ENCODE measurements at regions of chr11 and their contacts with region 1.

Region 1: DNA sequence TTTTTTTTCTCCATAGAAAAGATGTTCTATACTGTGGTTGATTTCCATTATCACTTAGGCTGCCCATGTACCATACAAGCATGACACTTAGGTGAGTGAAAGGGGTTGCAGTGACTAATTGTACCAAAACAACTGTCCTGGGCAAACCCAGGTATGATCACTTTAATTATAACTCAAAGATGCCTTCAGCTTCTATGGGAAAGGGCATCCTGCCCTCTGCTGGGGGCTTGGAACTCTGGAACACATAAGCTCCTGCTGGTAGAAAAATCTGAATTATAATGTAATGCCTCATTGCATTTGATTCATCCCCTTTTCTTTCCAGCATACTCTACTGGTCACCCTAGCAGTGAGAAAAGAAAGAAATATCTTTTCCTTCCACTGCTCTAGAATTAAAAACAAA is 206.3 kb downstream of the DDX10 start:
- DNase-seq: peak; percentile 81
- H3K4me3 ChIP-seq: peak overlapping the region in 1 of 3 experiments; percentile 74
- H3K27ac ChIP-seq: peak overlapping the region; percentile 100
- H3K4me1 ChIP-seq: peaks cover 63% of the 10 kb centered on the region
- H3K27me3 ChIP-seq: no peaks in the 10 kb centered on the region
- CTCF ChIP-seq: peak; percentile 55 to 63
- POLR2A ChIP-seq: no peak

Region 2: GRCh38 chr11:108733479-108734116 is 137.6 kb before region 1 on chr11:
- CTCF ChIA-PET with region 1: interaction called, 15 read pairs
- POLR2A ChIA-PET with region 1: no interaction called
- dilution Hi-C with region 1: no loop called
- intact Hi-C with region 1: loop called (anchors 1 kb)
- DNase-seq: peak; percentile 63
- H3K4me3 ChIP-seq: no peak overlapping the region
- H3K27ac ChIP-seq: peak overlapping the region; percentile 52
- H3K4me1 ChIP-seq: peaks cover 23% of the 10 kb centered on the region
- H3K27me3 ChIP-seq: no peaks in the 10 kb centered on the region
- CTCF ChIP-seq: no peak
- POLR2A ChIP-seq: no peak

Region 3: DNA sequence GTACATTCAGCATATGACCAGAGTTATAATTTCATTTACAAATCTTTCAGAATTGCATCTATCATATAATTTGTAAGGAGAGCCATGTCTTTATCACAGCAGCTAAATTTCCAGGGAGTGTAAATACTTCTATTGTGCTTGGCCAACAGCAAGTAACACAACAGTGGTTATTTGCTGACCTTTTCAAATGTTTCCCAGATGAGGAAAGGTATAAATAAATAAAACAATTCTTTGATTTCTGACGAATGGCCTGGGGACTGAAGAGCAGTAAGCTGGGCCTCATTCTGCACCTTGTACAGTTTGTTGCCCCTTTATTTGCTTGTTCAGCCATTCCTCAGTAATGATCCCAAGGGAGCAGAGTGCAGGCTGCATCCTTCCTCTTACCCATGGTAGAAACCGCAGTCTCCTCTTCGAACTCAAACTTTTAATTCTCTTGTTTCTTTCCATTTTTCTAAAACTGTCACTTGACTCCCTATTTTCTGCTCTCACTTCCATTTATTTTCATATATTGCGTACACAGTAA is 73.5 kb before region 1 on chr11:
- CTCF ChIA-PET with region 1: no interaction called
- POLR2A ChIA-PET with region 1: no interaction called
- dilution Hi-C with region 1: no loop called
- intact Hi-C with region 1: no loop called
- DNase-seq: no peak
- H3K4me3 ChIP-seq: no peak overlapping the region
- H3K27ac ChIP-seq: no peak overlapping the region
- H3K4me1 ChIP-seq: no peaks in the 10 kb centered on the region
- H3K27me3 ChIP-seq: no peaks in the 10 kb centered on the region
- CTCF ChIP-seq: no peak
- POLR2A ChIP-seq: no peak

Region 4: DNA sequence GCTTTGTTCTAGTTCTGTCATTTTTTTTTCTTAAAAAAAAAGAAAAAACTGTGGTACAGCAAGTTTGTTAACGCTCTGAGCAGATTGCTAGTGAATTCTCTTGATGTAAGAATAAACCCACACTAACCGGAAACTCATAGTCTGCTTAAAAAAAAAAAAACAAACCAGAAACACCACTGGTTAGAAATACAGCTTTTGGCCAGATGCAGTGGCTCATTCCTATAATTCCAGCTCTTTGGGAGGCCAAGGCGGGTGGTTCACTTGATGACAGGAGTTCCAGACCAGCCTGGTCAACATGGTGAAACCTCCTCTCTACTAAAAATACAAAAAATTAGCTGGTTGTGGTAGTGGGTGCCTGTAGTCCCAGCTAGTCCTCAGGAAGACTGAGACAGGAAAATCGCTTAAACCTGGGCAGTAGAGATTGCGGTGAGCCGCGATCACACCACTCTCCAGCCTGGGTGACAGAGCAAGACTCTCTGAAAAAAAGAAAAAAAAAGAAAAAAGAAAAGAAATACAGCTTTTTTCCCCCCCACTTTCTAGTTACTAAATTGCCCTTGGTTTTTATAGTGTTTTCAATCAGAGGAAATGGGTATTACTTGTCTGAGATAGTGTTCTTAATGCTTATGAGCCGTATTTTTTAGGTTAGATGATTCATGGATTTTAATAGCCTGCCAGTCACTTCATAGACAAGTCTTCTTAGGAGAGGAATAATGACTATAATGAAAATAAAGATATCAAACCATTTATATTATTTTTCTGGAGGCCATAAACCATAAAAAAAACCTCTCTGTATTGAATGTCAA is 16.5 kb after region 1 on chr11:
- CTCF ChIA-PET with region 1: interaction called, 11 read pairs
- POLR2A ChIA-PET with region 1: no interaction called
- dilution Hi-C with region 1: no loop called
- intact Hi-C with region 1: no loop called
- DNase-seq: no peak
- H3K4me3 ChIP-seq: no peak overlapping the region
- H3K27ac ChIP-seq: no peak overlapping the region
- H3K4me1 ChIP-seq: peaks cover 21% of the 10 kb centered on the region
- H3K27me3 ChIP-seq: no peaks in the 10 kb centered on the region
- CTCF ChIP-seq: no peak
- POLR2A ChIP-seq: no peak

Region 5: DNA sequence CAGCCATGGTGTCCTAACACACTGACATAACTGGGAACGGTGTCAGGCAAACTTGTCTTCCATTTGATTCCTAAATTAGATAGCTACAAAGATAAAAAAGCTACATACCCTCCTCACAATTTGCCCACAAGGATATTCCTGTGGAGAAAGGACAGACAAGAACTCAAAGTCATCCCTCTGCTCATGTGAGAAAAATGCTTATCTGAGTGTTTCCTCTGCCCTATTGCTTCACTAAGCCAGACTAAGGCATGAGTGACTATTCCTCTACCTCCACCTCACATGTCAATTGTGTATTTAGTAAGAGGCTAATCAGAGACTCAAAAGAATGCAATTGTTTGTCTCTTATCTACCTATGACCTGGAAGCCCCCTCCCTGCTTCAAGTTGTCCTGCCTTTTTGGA is 41.4 kb after region 1 on chr11:
- CTCF ChIA-PET with region 1: interaction called, 10 read pairs
- POLR2A ChIA-PET with region 1: no interaction called
- dilution Hi-C with region 1: no loop called
- intact Hi-C with region 1: no loop called
- DNase-seq: no peak
- H3K4me3 ChIP-seq: no peak overlapping the region
- H3K27ac ChIP-seq: no peak overlapping the region
- H3K4me1 ChIP-seq: peaks cover 6% of the 10 kb centered on the region
- H3K27me3 ChIP-seq: no peaks in the 10 kb centered on the region
- CTCF ChIP-seq: no peak
- POLR2A ChIP-seq: no peak

Region 6: GRCh38 chr11:108967571-108967970 is 96.4 kb after region 1 on chr11:
- CTCF ChIA-PET with region 1: no interaction called
- POLR2A ChIA-PET with region 1: no interaction called
- dilution Hi-C with region 1: no loop called
- intact Hi-C with region 1: no loop called
- DNase-seq: no peak
- H3K4me3 ChIP-seq: no peak overlapping the region
- H3K27ac ChIP-seq: no peak overlapping the region
- H3K4me1 ChIP-seq: no peaks in the 10 kb centered on the region
- H3K27me3 ChIP-seq: no peaks in the 10 kb centered on the region
- CTCF ChIP-seq: no peak
- POLR2A ChIP-seq: no peak

Region 7: DNA sequence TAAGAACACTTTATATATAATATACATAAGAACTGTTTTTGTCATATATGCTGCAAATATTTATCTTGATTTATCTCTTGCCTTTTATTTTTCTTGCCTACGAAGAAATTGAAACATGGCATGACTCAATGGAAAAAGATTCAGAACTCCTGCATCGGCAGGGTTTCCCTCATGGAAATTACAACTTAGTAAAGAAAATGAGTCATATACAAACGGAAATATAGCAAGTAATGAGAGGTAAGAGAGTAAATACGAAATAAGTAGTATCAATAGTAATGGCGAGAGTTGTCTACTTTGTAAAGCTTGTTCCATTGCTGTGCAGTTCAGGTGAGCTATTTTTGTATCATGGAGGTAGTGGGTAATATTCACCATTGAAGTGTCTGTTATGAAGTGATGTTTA is 144.1 kb after region 1 on chr11:
- CTCF ChIA-PET with region 1: no interaction called
- POLR2A ChIA-PET with region 1: no interaction called
- dilution Hi-C with region 1: no loop called
- intact Hi-C with region 1: loop called (anchors 5 kb)
- DNase-seq: peak; percentile 64
- H3K4me3 ChIP-seq: no peak overlapping the region
- H3K27ac ChIP-seq: peak overlapping the region; percentile 51
- H3K4me1 ChIP-seq: peaks cover 14% of the 10 kb centered on the region
- H3K27me3 ChIP-seq: no peaks in the 10 kb centered on the region
- CTCF ChIP-seq: no peak
- POLR2A ChIP-seq: no peak

Region 8: DNA sequence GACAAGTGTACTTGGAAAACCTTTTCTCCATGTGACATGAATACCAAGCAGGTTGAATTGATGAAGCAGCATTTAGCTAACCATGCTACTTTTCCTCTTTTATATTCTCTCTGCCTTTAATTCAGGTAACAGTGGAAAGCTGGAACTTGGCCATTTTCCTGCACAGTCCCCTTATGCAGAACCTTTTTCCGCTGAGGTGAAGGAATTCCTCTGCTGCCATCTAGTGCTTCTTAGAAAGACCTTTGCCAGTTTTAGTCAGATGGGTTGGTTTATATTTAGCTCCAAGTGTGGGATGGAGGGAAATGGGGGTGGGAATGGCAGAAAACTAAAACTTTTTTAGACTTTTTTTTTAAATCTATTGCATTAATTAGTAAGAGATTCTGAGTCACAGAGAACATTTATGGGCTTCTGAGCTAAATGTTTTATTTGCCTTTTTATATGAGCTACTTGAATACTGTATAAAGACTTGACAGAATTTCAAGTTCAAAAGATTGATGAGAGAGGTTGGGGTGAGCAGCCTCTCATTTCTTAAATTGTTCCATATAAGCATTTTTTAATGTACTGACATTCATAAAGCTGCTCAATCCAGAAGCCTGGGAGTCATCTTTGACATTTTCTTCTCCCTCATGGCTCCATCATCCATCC is 1068.1 kb after region 1 on chr11:
- CTCF ChIA-PET with region 1: interaction called, 4 read pairs
- POLR2A ChIA-PET with region 1: no interaction called
- dilution Hi-C with region 1: no loop called
- intact Hi-C with region 1: loop called (anchors 5 kb)
- DNase-seq: peak; percentile 80
- H3K4me3 ChIP-seq: no peak overlapping the region
- H3K27ac ChIP-seq: no peak overlapping the region
- H3K4me1 ChIP-seq: no peaks in the 10 kb centered on the region
- H3K27me3 ChIP-seq: no peaks in the 10 kb centered on the region
- CTCF ChIP-seq: peak; percentile 57 to 61
- POLR2A ChIP-seq: no peak

Region 9: GRCh38 chr11:109984634-109985289 is 1113.6 kb after region 1 on chr11:
- CTCF ChIA-PET with region 1: no interaction called
- POLR2A ChIA-PET with region 1: no interaction called
- dilution Hi-C with region 1: no loop called
- intact Hi-C with region 1: no loop called
- DNase-seq: no peak
- H3K4me3 ChIP-seq: no peak overlapping the region
- H3K27ac ChIP-seq: no peak overlapping the region
- H3K4me1 ChIP-seq: no peaks in the 10 kb centered on the region
- H3K27me3 ChIP-seq: no peaks in the 10 kb centered on the region
- CTCF ChIP-seq: no peak
- POLR2A ChIP-seq: no peak

Measured in endothelial cell of umbilical vein (primary cell).